IMR-90 (cell line): ENCODE measurements at regions of chr20 and their contacts with region 1.

Region 1: GRCh38 chr20:13525225-13525940 is 113.3 kb downstream of the TASP1 start:
- DNase-seq: peak; percentile 97
- ATAC-seq: peak; percentile 98
- H3K4me3 ChIP-seq: no peak overlapping the region
- H3K27ac ChIP-seq: peak overlapping the region; percentile 100
- H3K4me1 ChIP-seq: peaks cover 9% of the 10 kb centered on the region
- H3K27me3 ChIP-seq: no peaks in the 10 kb centered on the region
- CTCF ChIP-seq: no peak
- POLR2A ChIP-seq: no peak
- RAD21 ChIP-seq: no peak

Region 2: DNA sequence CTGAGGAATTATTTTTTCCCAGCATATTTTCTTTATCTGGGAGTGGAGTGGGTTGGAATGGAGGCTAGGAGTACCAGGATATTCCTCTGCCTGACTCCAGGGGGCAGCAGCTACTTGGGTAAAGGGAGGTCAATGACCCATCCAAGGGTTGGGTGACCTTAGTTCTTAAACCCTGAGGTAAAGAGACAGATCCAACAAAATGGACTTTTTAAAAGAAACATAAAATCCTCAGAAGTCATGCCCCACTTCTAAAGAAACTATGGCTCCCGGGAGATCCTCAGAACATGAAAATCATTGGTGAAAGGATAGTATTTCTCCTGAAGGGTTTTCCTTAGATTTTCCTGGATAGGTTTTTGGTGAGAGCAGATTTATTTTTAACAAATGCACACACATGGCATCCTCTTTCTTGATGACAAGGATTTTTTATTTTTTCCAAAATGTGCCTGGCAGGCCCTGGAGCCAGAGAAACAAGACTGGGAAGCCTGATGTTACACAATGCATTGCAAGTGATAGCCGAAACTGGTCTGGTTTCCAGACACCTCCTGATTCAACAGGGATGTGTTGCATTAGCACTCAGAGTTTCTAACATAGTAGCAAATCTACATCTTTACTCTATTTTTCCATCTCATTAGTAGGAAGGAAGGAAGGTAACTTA is 1848.6 kb before region 1 on chr20:
- CTCF ChIA-PET with region 1: no interaction called
- POLR2A ChIA-PET with region 1: no interaction called
- dilution Hi-C with region 1: no loop called
- in situ Hi-C with region 1: no loop called
- intact Hi-C with region 1: no loop called
- DNase-seq: peak; percentile 42
- ATAC-seq: peak; percentile 99
- H3K4me3 ChIP-seq: no peak overlapping the region
- H3K27ac ChIP-seq: no peak overlapping the region
- H3K4me1 ChIP-seq: no peaks in the 10 kb centered on the region
- H3K27me3 ChIP-seq: peaks cover 3% of the 10 kb centered on the region; the same call in 1 of the 2 replicates
- CTCF ChIP-seq: peak; percentile 91
- POLR2A ChIP-seq: no peak
- RAD21 ChIP-seq: peak; percentile 97

Region 3: DNA sequence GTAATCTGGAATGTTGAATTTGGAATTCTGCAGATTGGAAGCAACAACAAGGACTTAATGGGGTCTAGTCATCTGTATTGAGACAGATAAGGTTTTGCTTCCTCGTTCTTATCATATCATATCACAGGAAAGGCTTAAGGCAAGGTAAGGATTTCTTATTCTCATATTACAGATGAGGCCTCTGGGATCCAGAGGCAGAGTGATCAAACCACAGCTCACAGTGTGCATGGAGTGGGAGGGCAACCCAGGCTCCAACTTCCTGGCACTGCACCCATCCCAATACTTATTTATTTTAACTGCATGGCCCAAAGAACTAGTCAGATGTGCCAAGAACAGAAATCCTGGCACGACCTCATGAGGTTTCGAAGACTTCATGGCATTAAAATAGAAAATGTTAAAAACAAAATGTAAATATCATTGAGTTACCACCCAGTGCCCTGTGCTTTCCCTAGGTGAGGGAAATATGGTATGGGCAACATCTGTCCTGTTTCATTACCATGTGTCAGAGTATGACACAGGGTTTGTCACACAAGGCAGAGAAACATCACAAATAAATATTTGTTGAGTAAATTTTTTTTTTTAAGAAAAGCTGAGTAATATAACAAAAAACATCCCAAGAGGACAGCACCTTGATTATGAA is 112.5 kb before region 1 on chr20:
- CTCF ChIA-PET with region 1: interaction called, 3 read pairs
- POLR2A ChIA-PET with region 1: no interaction called
- dilution Hi-C with region 1: no loop called
- in situ Hi-C with region 1: no loop called
- intact Hi-C with region 1: loop called (anchors 1 kb)
- DNase-seq: peak; percentile 15
- ATAC-seq: peak; percentile 61
- H3K4me3 ChIP-seq: no peak overlapping the region
- H3K27ac ChIP-seq: no peak overlapping the region
- H3K4me1 ChIP-seq: no peaks in the 10 kb centered on the region; the same call in 1 of the 2 replicates
- H3K27me3 ChIP-seq: no peaks in the 10 kb centered on the region
- CTCF ChIP-seq: no peak
- POLR2A ChIP-seq: no peak
- RAD21 ChIP-seq: no peak